H1 (cell line): ENCODE measurements at regions of chr9 and their contacts with region 1.

Region 1: GRCh38 chr9:128412120-128412790 is 8.4 kb upstream of the CERCAM start:
- DNase-seq: peak; percentile 87 to 100
- H3K4me3 ChIP-seq: peak overlapping the region in 1 of 4 experiments; percentile 31; a peak in 1 of 8 replicates
- H3K27ac ChIP-seq: no peak overlapping the region
- H3K4me1 ChIP-seq: peaks cover 13 to 37% (median 20%) of the 10 kb centered on the region in 4 experiments
- H3K27me3 ChIP-seq: peaks cover 38 to 67% (median 57%) of the 10 kb centered on the region in 4 experiments
- CTCF ChIP-seq: peak; percentile 96 to 99 (median 98)
- EP300 ChIP-seq: no peak
- POLR2A ChIP-seq: no peak
- RAD21 ChIP-seq: peak; percentile 100

Region 2: DNA sequence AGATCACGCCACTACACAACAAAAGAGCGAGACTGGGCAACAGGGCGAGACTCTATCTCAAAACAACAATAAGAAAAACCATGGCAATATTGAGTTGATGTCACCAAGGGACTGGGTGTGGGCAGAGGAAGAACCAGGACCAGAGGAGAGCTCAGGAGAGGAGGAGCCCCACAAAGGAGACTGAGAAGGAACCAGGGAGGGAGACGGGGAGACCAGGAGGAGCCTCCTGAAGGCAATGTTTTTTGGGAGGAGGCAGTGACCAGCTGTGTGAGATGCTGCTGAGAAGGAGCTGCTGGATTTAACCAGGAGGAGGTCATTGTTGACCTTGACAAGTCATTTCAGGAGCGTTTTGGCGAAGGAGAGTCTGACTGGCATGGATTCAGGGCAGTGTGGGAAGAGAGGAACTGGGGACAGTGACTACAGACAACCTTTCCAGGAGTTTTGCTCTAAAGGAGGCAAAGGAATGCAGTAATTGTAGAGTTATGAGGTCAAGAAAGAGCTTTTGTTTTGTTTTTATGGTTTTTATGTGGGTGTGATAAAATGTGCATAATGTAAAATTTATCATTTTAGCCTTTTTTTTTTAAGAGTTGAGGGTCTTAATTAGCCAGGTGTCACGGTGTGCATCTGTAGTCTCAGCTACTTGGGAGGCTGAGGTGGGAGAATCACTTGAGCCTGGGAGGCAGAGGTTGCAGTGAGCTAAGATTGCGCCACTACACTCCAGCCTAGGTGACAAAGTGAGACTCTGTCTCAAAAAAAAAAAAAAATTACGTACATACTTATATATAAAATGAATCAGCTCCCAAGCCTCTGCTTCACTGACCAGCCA is 107.9 kb before region 1 on chr9:
- CTCF ChIA-PET with region 1: interaction called, 88 read pairs
- POLR2A ChIA-PET with region 1: no interaction called
- DNase-seq: no peak
- H3K4me3 ChIP-seq: no peak overlapping the region
- H3K27ac ChIP-seq: no peak overlapping the region
- H3K4me1 ChIP-seq: no peaks in the 10 kb centered on the region
- H3K27me3 ChIP-seq: no peaks in the 10 kb centered on the region
- CTCF ChIP-seq: no peak
- EP300 ChIP-seq: no peak
- POLR2A ChIP-seq: no peak
- RAD21 ChIP-seq: no peak

Region 3: DNA sequence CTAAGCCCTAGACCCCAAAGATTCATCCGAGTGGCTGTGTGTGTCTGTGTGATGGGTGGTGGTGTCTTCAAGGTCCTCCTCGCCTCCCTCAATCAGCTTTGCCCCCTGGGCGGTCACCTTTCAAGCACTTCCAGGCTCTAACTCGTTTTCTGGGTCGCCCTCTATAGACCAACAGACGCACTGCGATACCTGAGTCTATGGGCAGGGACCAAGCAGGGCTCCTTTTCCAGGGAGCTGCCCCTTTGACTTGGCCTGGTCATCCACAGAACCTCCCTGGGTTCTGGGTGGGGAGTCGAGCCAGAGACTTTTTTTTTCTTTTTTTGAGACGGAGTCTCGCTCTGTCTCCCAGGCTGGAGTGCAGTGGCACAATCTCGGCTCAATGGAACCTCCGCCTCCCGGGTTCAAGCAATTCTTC is 70.8 kb before region 1 on chr9:
- CTCF ChIA-PET with region 1: interaction called, 25 read pairs
- POLR2A ChIA-PET with region 1: interaction called, 3 read pairs
- DNase-seq: peak in 1 of 2 experiments; percentile 85
- H3K4me3 ChIP-seq: peak overlapping the region; percentile 60 to 90 (median 76); a peak in 7 of 8 replicates
- H3K27ac ChIP-seq: no peak overlapping the region
- H3K4me1 ChIP-seq: peaks cover 0 to 2% (median 0%) of the 10 kb centered on the region in 4 experiments; a peak in 2 of 7 replicates
- H3K27me3 ChIP-seq: no peaks in the 10 kb centered on the region
- CTCF ChIP-seq: peak; percentile 65 to 81 (median 76)
- EP300 ChIP-seq: no peak
- POLR2A ChIP-seq: no peak
- RAD21 ChIP-seq: peak; percentile 57 to 64

Region 4: GRCh38 chr9:128383007-128383753 is 29.1 kb before region 1 on chr9:
- CTCF ChIA-PET with region 1: interaction called, 544 read pairs
- POLR2A ChIA-PET with region 1: interaction called, 27 read pairs
- DNase-seq: peak; percentile 68 to 82
- H3K4me3 ChIP-seq: peak overlapping the region in 3 of 4 experiments; percentile 11 to 44 (median 24); a peak in 5 of 8 replicates
- H3K27ac ChIP-seq: no peak overlapping the region
- H3K4me1 ChIP-seq: peaks cover 26 to 40% (median 36%) of the 10 kb centered on the region in 4 experiments
- H3K27me3 ChIP-seq: peaks cover 9 to 68% (median 60%) of the 10 kb centered on the region in 4 experiments
- CTCF ChIP-seq: no peak
- EP300 ChIP-seq: no peak
- POLR2A ChIP-seq: no peak
- RAD21 ChIP-seq: no peak